ENCODE measurements at regions of chr12 and their contacts with region 1.

Region 1: GRCh38 chr12:116099652-116100432 is 177.7 kb downstream of the MED13L start:
- DNase-seq: no peak
- H3K4me3 Mint-ChIP-seq: no peak overlapping the region
- H3K27ac Mint-ChIP-seq: peak overlapping the region; percentile 55
- H3K4me1 Mint-ChIP-seq: peaks cover 39% of the 10 kb centered on the region
- H3K27me3 Mint-ChIP-seq: no peaks in the 10 kb centered on the region

Region 2: GRCh38 chr12:116087962-116088361 is 11.9 kb before region 1 on chr12:
- CTCF ChIA-PET with region 1: interaction called, 5 read pairs
- POLR2A ChIA-PET with region 1: no interaction called
- intact Hi-C with region 1: loop called (anchors 1 kb)
- DNase-seq: no peak
- H3K4me3 Mint-ChIP-seq: no peak overlapping the region
- H3K27ac Mint-ChIP-seq: no peak overlapping the region
- H3K4me1 Mint-ChIP-seq: peaks cover 45% of the 10 kb centered on the region
- H3K27me3 Mint-ChIP-seq: no peaks in the 10 kb centered on the region

Region 3: GRCh38 chr12:116123451-116124258 is 23.8 kb after region 1 on chr12:
- CTCF ChIA-PET with region 1: no interaction called
- POLR2A ChIA-PET with region 1: no interaction called
- intact Hi-C with region 1: loop called (anchors 1 kb)
- DNase-seq: peak; percentile 67
- H3K4me3 Mint-ChIP-seq: peak overlapping the region; percentile 49
- H3K27ac Mint-ChIP-seq: peak overlapping the region; percentile 10
- H3K4me1 Mint-ChIP-seq: peaks cover 68% of the 10 kb centered on the region
- H3K27me3 Mint-ChIP-seq: no peaks in the 10 kb centered on the region

Measured in activated CD4-positive, alpha-beta memory T cell treated with anti-CD3 and anti-CD28 coated beads for 36 hours (primary cell).